Panc1 (cell line): ENCODE measurements at regions of chr1 and their contacts with region 1.

Region 1: GRCh38 chr1:114507513-114508145 is 3.4 kb downstream of the TRIM33 start:
- DNase-seq: no peak
- ATAC-seq: no peak
- H3K4me3 ChIP-seq: no peak overlapping the region
- H3K27ac ChIP-seq: no peak overlapping the region
- H3K4me1 ChIP-seq: peaks cover 8% of the 10 kb centered on the region
- H3K27me3 ChIP-seq: no peaks in the 10 kb centered on the region
- CTCF ChIP-seq: no peak

Region 2: DNA sequence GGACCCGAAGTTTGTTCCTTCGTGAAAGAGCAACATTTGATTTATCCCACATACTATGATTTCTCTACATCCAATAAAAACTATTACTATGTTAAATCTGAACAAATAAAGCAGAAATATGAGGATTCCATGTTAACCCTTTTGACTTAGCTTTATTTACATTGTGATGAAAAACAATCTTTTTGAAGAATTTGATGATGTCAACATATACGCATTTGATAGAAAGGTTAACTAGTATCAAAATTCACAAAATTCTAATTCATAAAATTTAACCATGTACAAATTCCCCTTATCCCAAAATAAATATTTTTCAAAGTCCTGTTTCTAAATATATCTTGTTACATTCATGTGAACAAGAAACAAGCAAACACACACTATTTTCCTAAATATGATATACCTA is 70.8 kb before region 1 on chr1:
- CTCF ChIA-PET with region 1: no interaction called
- POLR2A ChIA-PET with region 1: interaction called, 15 read pairs
- in situ Hi-C with region 1: no loop called
- intact Hi-C with region 1: no loop called
- DNase-seq: no peak
- ATAC-seq: no peak
- H3K4me3 ChIP-seq: no peak overlapping the region
- H3K27ac ChIP-seq: no peak overlapping the region
- H3K4me1 ChIP-seq: no peaks in the 10 kb centered on the region
- H3K27me3 ChIP-seq: no peaks in the 10 kb centered on the region
- CTCF ChIP-seq: no peak